ENCODE measurements at regions of chr19 and their contacts with region 1.

Region 1: GRCh38 chr19:15091901-15092753 is 10.1 kb downstream of the OR1I1 start:
- DNase-seq: peak in 6 of 7 donors; percentile 26 to 66 (median 54)
- H3K4me3 ChIP-seq: no peak overlapping the region
- H3K27ac ChIP-seq: no peak overlapping the region
- H3K4me1 ChIP-seq: peaks cover 5 to 7% of the 10 kb centered on the region in 2 donors
- H3K27me3 ChIP-seq: no peaks in the 10 kb centered on the region
- CTCF ChIP-seq: peak; percentile 55 to 77 (median 66)
- POLR2A ChIP-seq: no peak

Region 2: DNA sequence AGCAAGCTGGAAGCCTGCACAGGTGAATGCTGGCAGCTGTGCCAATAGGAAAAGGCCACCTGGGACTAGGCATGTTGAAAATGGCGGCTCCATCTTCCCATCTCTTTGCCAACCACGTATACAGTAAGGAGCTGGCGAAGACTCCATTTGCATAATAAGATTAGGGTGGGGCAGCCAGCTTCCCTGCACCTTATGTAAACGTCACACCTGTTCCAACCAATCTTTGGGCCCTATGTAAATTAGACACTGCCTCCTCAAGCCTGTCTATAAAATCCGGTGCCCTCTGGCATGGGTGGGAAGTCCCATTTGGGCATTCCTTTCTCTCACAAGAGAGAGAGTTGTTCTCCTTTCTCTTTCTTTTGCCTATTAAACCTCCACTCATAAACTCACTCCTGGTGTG is 330.5 kb before region 1 on chr19:
- intact Hi-C with region 1: no loop called
- DNase-seq: no peak
- H3K4me3 ChIP-seq: no peak overlapping the region
- H3K27ac ChIP-seq: no peak overlapping the region
- H3K4me1 ChIP-seq: no peaks in the 10 kb centered on the region
- H3K27me3 ChIP-seq: no peaks in the 10 kb centered on the region
- CTCF ChIP-seq: no peak
- POLR2A ChIP-seq: no peak

Region 3: DNA sequence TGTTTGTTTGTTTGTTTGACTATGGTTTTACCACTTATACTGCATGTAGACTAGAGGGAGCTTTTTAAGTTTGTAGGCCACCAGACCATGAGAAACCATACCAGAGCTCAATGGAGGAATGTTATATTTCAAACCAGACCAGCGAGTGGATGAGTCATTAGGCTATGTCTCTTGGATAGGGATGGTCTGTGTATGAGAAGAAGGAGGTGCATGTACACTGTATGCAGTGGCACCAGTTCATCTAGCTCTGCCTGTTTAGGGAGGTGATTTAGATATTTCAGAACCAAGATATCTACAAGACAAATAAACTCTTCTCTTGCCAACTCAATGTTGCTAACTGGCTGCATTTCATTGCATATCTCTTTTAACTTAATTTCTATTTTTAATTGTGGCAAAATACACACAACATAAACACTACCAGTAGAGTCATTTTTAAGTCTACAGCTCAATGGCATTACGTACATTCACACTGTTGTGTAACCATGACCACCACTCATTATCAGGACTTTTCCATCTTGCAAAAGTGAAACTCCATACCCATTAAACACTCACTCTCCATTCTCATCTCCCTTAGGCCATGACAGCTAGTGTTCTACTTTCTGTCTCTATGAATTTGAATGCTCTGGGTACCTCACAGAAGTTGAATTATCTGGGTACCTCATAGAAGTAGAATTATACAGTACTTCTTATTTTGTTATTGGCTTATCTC is 44.3 kb after region 1 on chr19:
- intact Hi-C with region 1: loop called in 1 of 2 experiments (anchors 5 kb)
- DNase-seq: no peak
- H3K4me3 ChIP-seq: no peak overlapping the region
- H3K27ac ChIP-seq: no peak overlapping the region
- H3K4me1 ChIP-seq: no peaks in the 10 kb centered on the region
- H3K27me3 ChIP-seq: no peaks in the 10 kb centered on the region
- CTCF ChIP-seq: no peak
- POLR2A ChIP-seq: no peak

Region 4: GRCh38 chr19:15154002-15154612 is 62.0 kb after region 1 on chr19:
- intact Hi-C with region 1: loop called (anchors 5 kb)
- DNase-seq: peak in 2 of 7 donors; percentile 27 to 45
- H3K4me3 ChIP-seq: no peak overlapping the region
- H3K27ac ChIP-seq: no peak overlapping the region
- H3K4me1 ChIP-seq: no peaks in the 10 kb centered on the region
- H3K27me3 ChIP-seq: no peaks in the 10 kb centered on the region
- CTCF ChIP-seq: peak in 5 of 6 experiments; percentile 11 to 46 (median 32)
- POLR2A ChIP-seq: no peak

Region 5: DNA sequence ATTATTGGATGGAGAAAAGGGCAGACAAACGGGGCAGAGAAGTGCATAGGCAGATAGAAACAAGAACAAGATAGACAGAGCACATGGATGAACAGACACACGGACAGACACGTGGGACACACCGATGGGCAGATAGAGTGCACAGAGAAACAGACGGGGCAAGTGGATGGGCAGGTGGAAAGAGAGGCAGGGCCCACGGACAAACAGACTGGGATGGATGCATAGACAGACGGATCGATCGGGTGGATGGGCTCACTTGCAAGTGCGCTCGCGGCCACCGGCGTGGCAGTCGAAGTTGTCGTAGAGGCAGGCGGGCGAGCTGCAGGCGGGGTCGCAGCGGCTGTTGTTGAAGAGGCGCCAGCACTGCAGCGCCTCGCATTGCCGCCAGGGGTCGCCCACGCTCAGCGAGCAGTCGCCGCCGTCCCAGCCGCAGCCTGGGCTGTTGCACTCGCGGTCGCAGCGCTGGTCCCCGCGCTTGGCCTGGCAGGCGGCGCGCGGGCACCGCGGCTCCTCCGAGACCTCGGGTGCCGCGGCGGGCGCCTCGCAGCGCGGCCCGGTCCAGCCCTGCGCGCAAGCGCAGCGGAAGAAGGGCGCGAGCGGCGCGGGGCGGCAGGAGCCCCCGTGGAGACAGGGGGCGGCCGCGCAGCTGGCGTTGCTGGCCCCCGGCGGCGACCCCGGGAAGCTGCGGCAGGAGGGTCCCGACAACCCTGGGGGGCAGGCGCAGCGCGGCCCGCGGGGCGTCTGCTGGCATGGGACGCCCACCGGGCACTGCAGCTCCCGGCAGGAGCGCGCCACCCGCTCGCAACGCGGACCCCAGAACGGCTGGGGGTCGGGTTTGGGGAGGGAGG is 85.4 kb after region 1 on chr19:
- intact Hi-C with region 1: no loop called
- DNase-seq: peak; percentile 65 to 87 (median 81)
- H3K4me3 ChIP-seq: peak overlapping the region in 1 of 4 donors; percentile 47
- H3K27ac ChIP-seq: no peak overlapping the region
- H3K4me1 ChIP-seq: no peaks in the 10 kb centered on the region
- H3K27me3 ChIP-seq: no peaks in the 10 kb centered on the region
- CTCF ChIP-seq: peak; percentile 78 to 100 (median 92)
- POLR2A ChIP-seq: no peak

Measured in adrenal gland (tissue), 19 donors.